Panc1 (cell line): ENCODE measurements at regions of chr20 and their contacts with region 1.

Region 1: DNA sequence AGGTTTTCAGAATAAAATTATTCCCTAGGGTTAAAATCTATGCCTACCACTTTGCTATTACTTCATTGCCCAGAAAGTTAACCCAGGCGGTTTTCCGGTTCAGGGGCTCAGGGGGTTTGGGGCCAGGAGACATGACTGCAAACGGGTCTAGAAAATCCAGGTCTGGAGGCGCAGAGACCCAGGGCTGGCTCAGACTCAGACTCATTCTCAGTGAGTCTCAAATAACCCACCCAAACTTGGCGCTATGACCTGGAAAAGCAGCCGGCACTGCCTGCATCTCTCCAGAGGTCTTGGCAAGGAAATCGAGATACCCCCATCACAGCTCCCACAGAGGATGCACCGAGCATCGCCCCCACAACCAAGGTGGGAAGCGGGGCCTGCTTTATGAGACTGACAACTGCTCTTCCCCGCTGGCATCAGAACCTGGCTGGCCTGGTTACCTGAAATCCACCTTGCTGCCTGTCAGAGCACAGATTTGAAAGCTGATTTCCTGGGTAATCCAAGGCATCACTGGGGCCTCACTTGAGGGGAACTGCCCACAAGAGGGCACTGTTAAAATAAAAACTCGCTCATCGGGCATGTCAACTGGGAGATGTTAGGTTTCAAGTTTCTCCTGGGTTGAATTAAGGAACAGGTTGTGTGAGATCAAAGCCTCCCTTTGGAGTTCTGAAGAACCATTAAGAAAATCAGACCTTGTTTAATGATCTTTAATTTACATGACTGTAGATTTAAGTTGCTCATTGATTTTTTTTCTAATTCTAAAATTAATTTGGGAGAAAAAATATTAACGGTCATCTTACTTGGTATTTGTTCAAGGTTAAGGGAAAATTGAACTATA is 55.1 kb downstream of the KIF16B start:
- DNase-seq: peak; percentile 42
- ATAC-seq: peak; percentile 93
- H3K4me3 ChIP-seq: no peak overlapping the region
- H3K27ac ChIP-seq: no peak overlapping the region
- H3K4me1 ChIP-seq: no peaks in the 10 kb centered on the region
- H3K27me3 ChIP-seq: no peaks in the 10 kb centered on the region
- CTCF ChIP-seq: peak; percentile 76

Region 2: DNA sequence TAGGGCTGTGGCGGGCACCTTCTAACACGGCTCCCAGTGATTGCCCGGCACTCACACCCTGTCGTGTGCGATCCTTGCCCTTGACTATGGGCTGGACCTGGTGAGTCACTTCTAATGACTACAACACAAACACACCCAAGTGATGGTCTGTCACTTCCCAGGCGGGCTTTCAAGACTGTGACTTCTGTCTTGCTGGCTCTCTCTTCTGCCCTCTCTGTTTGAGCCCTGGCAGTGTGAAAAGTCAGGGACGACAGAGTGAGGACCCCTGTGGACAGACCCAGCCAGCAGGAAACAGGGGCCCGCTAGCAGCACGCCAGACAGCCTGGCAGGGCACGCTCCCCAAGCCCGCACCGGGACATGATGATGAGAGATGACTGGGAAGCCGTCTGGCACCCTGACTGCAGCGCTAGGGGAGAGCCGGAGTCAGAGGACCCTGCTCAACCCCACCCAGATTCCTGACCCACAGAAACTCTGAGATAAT is 12.1 kb after region 1 on chr20:
- CTCF ChIA-PET with region 1: no interaction called
- POLR2A ChIA-PET with region 1: no interaction called
- in situ Hi-C with region 1: no loop called
- intact Hi-C with region 1: no loop called
- DNase-seq: peak; percentile 88
- ATAC-seq: peak; percentile 97
- H3K4me3 ChIP-seq: peak overlapping the region; percentile 17 to 52
- H3K27ac ChIP-seq: peak overlapping the region; percentile 78
- H3K4me1 ChIP-seq: peaks cover 38% of the 10 kb centered on the region
- H3K27me3 ChIP-seq: no peaks in the 10 kb centered on the region
- CTCF ChIP-seq: no peak

Region 3: DNA sequence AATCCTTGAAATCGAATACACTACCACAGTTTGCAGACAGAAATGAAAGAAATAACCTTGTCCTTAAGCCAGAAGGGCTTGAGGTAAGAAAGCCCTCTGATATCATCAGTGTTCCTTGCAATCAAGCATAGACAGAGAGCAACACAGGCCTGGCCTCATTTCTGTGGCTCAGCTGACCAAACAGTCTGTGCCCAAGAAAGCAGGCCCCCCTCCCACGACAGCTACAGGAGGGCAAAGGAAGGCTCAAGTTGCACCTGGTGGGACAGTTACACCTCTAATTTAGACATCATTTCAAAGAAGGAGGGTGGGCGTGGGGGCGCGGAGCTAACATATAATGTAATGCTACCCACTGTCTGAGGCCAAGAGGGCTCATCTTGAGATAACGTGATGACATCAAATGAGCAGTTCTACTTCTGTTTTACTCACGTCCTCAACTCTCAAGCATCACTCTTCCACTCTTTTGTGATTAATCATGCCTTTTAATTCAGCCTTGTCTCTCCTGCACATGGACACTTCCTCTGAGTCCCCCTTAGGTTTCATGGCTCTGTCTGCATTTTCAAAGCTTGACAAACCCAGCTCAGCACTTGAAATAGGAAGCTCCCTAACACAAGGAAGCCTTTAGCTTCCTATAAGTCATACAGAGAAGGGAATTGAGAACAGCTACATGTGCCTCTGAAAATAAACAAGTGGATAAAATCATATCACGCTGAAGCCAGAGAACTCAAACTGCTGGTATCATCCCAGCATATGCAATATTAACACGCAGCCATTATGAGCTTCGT is 33.7 kb after region 1 on chr20:
- CTCF ChIA-PET with region 1: no interaction called
- POLR2A ChIA-PET with region 1: no interaction called
- in situ Hi-C with region 1: no loop called
- intact Hi-C with region 1: no loop called
- DNase-seq: no peak
- ATAC-seq: no peak
- H3K4me3 ChIP-seq: no peak overlapping the region
- H3K27ac ChIP-seq: no peak overlapping the region
- H3K4me1 ChIP-seq: peaks cover 3% of the 10 kb centered on the region; the same call in 1 of the 2 replicates
- H3K27me3 ChIP-seq: no peaks in the 10 kb centered on the region
- CTCF ChIP-seq: no peak

Region 4: GRCh38 chr20:16573001-16573965 is 55.1 kb after region 1 on chr20 and contains the start of gene KIF16B:
- CTCF ChIA-PET with region 1: no interaction called
- POLR2A ChIA-PET with region 1: interaction called, 3 read pairs
- in situ Hi-C with region 1: no loop called
- intact Hi-C with region 1: loop called (anchors 5 kb)
- DNase-seq: peak; percentile 82
- ATAC-seq: peak; percentile 88
- H3K4me3 ChIP-seq: peak within 1 kb of the TSS; percentile 81 to 95
- H3K27ac ChIP-seq: peak within 1 kb of the TSS; percentile 99
- H3K4me1 ChIP-seq: peaks cover 20% of the 10 kb centered on the region
- H3K27me3 ChIP-seq: no peaks in the 10 kb centered on the region
- CTCF ChIP-seq: no peak
- total RNA-seq, gene KIF16B: 16.6 TPM

Region 5: DNA sequence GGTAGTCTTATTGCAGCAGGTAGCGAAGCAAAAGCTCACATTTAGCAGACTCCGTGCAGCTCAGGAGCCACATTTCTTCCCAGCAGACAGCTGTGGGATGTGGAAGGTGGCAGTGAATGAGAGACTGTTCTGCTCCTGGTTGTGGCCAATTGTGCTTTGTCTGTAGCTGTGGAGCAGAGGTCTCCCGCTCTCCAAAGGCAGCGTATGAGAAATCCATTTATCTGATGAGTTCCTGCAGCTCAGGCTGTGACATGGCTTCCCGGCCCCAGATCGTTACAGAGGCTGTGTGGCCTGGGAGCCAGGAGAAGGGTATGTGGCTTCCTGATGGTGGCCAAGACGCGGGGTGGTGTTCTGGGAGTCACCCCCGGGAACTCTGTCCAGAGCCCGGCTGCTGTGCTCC is 119.6 kb after region 1 on chr20:
- CTCF ChIA-PET with region 1: no interaction called
- POLR2A ChIA-PET with region 1: no interaction called
- in situ Hi-C with region 1: no loop called
- intact Hi-C with region 1: loop called (anchors 1 kb)
- DNase-seq: no peak
- ATAC-seq: no peak
- H3K4me3 ChIP-seq: no peak overlapping the region
- H3K27ac ChIP-seq: no peak overlapping the region
- H3K4me1 ChIP-seq: no peaks in the 10 kb centered on the region
- H3K27me3 ChIP-seq: no peaks in the 10 kb centered on the region; the same call in 1 of the 2 replicates
- CTCF ChIP-seq: no peak

Region 6: DNA sequence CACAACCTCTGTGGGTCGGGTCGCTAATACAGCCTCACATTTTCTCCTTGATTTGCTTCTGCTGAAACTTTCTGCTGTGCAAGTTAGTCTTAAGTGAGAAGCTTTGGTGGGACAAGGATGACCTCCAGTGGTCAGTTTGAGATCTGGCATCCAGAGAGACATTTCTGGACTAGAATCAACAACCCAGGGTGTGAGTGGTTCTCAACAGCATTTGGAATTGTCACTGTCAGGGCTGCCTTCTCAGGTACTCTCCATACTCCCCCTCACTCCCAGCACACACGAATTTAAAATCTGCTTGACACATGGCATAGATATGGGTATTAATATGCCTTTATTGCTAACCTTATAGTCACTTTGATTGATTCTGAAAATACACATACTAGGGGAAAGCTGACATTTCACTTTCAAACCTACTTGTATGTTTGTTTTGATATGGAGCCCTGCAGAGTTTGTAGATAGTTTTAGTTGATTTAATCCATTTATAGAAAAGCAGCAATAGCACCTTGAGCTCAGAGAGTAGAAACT is 243.2 kb after region 1 on chr20:
- CTCF ChIA-PET with region 1: interaction called, 3 read pairs
- POLR2A ChIA-PET with region 1: no interaction called
- in situ Hi-C with region 1: no loop called
- intact Hi-C with region 1: loop called (anchors 10 kb)
- DNase-seq: peak; percentile 64
- ATAC-seq: peak; percentile 88
- H3K4me3 ChIP-seq: no peak overlapping the region
- H3K27ac ChIP-seq: no peak overlapping the region
- H3K4me1 ChIP-seq: no peaks in the 10 kb centered on the region
- H3K27me3 ChIP-seq: peaks cover 17% of the 10 kb centered on the region
- CTCF ChIP-seq: peak; percentile 81